CD8-positive, alpha-beta T cell (primary cell): ENCODE measurements at regions of chr14 and their contacts with region 1.

Region 1: DNA sequence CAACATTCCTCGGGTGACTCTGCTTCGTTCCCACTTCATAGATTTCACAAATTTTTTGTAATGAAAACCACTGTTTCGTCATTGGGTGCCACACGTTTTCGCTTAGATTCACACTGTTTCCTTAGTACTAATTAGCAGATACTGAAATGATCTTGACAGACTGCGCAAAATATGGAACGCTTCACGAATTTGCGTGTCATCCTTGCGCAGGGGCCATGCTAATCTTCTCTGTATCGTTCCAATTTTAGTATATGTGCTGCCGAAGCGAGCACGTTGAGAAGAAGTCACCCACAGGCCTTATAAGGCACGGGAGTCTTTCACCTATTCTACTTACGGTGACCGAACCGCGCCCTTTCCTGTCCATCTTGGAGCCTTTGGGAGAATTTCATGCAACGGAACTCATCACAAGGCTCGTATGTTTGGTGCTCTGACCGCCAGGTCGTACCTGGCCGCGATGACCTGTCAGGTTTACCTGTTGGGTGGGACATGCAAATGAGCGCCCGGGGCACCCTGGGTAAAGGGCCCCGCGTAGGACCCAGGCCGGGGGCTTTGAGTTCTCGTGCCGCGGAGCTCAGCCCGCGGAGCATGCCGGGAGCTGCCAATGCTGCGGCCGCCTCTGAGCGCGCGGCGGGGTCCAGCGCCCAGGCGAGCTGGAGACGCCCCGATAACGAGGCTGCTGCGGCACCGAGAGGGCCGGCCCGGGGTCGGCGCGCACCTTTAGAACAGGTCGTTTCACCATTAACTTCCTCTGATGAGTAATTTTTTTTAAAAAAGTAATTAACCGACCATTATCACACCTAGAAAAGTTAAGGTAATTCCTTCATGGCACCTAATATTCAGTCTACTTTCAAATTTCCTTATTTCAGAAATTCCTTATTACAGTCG is at the start of gene RNU6-8:
- DNase-seq: peak; percentile 66 to 92 (median 85)
- ATAC-seq: peak; percentile 80
- H3K4me3 ChIP-seq: peak within 1 kb of the TSS; percentile 87 to 92
- H3K4me3 Mint-ChIP-seq: peak within 1 kb of the TSS; percentile 90
- H3K27ac ChIP-seq: peak within 1 kb of the TSS; percentile 99 to 100
- H3K27ac Mint-ChIP-seq: peak within 1 kb of the TSS; percentile 100
- H3K4me1 ChIP-seq: peaks cover 20% of the 10 kb centered on the region
- H3K4me1 Mint-ChIP-seq: peaks cover 29% of the 10 kb centered on the region
- H3K27me3 ChIP-seq: no peaks in the 10 kb centered on the region
- H3K27me3 Mint-ChIP-seq: peaks cover 2% of the 10 kb centered on the region
- CTCF ChIP-seq: no peak
- total RNA-seq, gene RNU6-8: not detected

Region 2: GRCh38 chr14:31420319-31421111 is 782.7 kb before region 1 on chr14 and contains the start of gene HEATR5A:
- CTCF ChIA-PET with region 1: no interaction called
- POLR2A ChIA-PET with region 1: no interaction called
- intact Hi-C with region 1: loop called (anchors 2 to 5 kb)
- DNase-seq: peak; percentile 87 to 95 (median 93)
- ATAC-seq: peak; percentile 97
- H3K4me3 ChIP-seq: peak within 1 kb of the TSS; percentile 76 to 96
- H3K4me3 Mint-ChIP-seq: peak within 1 kb of the TSS; percentile 97
- H3K27ac ChIP-seq: peak within 1 kb of the TSS; percentile 63 to 71
- H3K27ac Mint-ChIP-seq: peak within 1 kb of the TSS; percentile 91
- H3K4me1 ChIP-seq: peaks cover 13% of the 10 kb centered on the region
- H3K4me1 Mint-ChIP-seq: peaks cover 25% of the 10 kb centered on the region
- H3K27me3 ChIP-seq: no peaks in the 10 kb centered on the region
- H3K27me3 Mint-ChIP-seq: no peaks in the 10 kb centered on the region
- CTCF ChIP-seq: no peak
- total RNA-seq, gene HEATR5A: 3.4 to 3.5 TPM

Region 3: DNA sequence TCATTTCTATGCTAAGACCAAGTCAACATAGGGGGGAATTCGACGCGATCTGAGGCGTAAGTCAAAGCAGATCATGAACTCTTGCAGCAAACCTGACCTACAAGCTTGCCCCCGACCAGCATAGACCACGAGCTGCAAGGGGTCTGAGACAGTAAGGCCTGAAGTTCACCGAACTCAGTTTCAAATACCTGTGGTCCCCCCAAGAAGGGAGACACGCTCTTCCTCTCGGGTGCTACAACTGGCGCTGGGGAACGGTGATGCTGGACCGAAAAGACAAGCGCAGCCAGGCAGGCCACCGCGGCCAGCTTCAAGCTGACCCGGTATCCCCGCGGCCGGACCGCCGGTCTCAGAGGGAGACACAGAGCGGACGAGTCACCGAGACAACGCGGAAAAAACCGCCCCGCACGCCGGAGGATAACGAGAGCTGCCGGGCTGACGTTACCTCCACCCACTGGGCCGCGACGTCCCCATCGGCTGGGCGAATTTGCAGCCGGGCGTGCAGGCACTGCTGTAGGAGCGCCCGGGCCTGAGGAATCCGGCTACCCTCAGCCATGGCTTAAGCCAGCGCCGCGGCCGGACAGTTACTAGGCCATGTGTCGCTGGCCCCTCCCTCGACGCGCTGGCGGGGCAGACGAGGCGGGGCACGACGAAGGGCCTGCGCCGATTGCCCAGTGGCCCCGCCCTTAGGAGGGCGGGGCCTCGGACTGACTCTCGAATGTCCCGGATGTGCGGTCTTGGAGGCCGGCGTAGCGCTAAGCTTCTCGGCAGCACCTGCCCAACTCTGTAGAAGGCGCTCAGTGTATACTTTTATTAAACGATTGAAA is 746.2 kb before region 1 on chr14 and contains the start of gene DTD2:
- CTCF ChIA-PET with region 1: no interaction called
- POLR2A ChIA-PET with region 1: no interaction called
- intact Hi-C with region 1: loop called (anchors 1 to 5 kb)
- DNase-seq: peak; percentile 87 to 95 (median 92)
- ATAC-seq: peak; percentile 98
- H3K4me3 ChIP-seq: peak within 1 kb of the TSS; percentile 93 to 95
- H3K4me3 Mint-ChIP-seq: peak within 1 kb of the TSS; percentile 96
- H3K27ac ChIP-seq: peak within 1 kb of the TSS; percentile 78 to 85
- H3K27ac Mint-ChIP-seq: peak within 1 kb of the TSS; percentile 92
- H3K4me1 ChIP-seq: peaks cover 15% of the 10 kb centered on the region
- H3K4me1 Mint-ChIP-seq: peaks cover 42% of the 10 kb centered on the region
- H3K27me3 ChIP-seq: no peaks in the 10 kb centered on the region
- H3K27me3 Mint-ChIP-seq: peaks cover 2% of the 10 kb centered on the region
- CTCF ChIP-seq: no peak
- total RNA-seq, gene DTD2: 4.9 to 6.5 TPM

Region 4: GRCh38 chr14:31561155-31561846 is 641.9 kb before region 1 on chr14 and contains the start of gene NUBPL:
- CTCF ChIA-PET with region 1: no interaction called
- POLR2A ChIA-PET with region 1: no interaction called
- intact Hi-C with region 1: loop called (anchors 1 kb)
- DNase-seq: peak; percentile 95 to 99 (median 98)
- ATAC-seq: peak; percentile 95
- H3K4me3 ChIP-seq: peak within 1 kb of the TSS; percentile 75 to 86
- H3K4me3 Mint-ChIP-seq: peak within 1 kb of the TSS; percentile 96
- H3K27ac ChIP-seq: peak within 1 kb of the TSS; percentile 82 to 86
- H3K27ac Mint-ChIP-seq: peak within 1 kb of the TSS; percentile 98
- H3K4me1 ChIP-seq: peaks cover 18% of the 10 kb centered on the region
- H3K4me1 Mint-ChIP-seq: peaks cover 35% of the 10 kb centered on the region
- H3K27me3 ChIP-seq: no peaks in the 10 kb centered on the region
- H3K27me3 Mint-ChIP-seq: peaks cover 4% of the 10 kb centered on the region
- CTCF ChIP-seq: no peak
- total RNA-seq, gene NUBPL: 4.7 to 7.5 TPM

Region 5: GRCh38 chr14:31937721-31938346 is 265.4 kb before region 1 on chr14:
- CTCF ChIA-PET with region 1: no interaction called
- POLR2A ChIA-PET with region 1: no interaction called
- intact Hi-C with region 1: no loop called
- DNase-seq: peak in 6 of 9 experiments; percentile 14 to 50 (median 22)
- ATAC-seq: peak; percentile 82
- H3K4me3 ChIP-seq: no peak overlapping the region
- H3K4me3 Mint-ChIP-seq: no peak overlapping the region
- H3K27ac ChIP-seq: no peak overlapping the region
- H3K27ac Mint-ChIP-seq: no peak overlapping the region
- H3K4me1 ChIP-seq: no peaks in the 10 kb centered on the region
- H3K4me1 Mint-ChIP-seq: peaks cover 4% of the 10 kb centered on the region
- H3K27me3 ChIP-seq: no peaks in the 10 kb centered on the region
- H3K27me3 Mint-ChIP-seq: peaks cover 2% of the 10 kb centered on the region
- CTCF ChIP-seq: no peak

Region 6: DNA sequence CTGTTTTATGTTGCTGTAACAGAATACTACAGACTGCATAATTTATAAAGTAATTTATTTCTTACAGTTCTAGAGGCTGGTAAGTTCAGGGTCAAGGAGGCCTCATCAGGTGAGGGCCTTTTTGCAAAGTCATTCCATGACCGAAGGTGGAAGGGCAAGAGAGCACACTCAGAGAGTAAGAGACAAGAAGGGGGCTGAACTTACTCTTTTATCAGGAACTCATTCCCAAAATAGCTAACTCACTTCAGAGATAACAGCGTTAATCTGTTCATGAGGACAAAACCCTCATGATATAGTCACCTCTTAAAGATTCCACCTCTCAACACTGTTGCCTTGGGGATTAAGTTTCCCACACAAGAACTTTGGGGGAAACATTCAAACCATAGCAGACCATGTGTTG is 52.8 kb before region 1 on chr14:
- CTCF ChIA-PET with region 1: no interaction called
- POLR2A ChIA-PET with region 1: no interaction called
- intact Hi-C with region 1: loop called in 1 of 2 experiments (anchors 5 kb)
- DNase-seq: no peak
- ATAC-seq: no peak
- H3K4me3 ChIP-seq: no peak overlapping the region
- H3K4me3 Mint-ChIP-seq: no peak overlapping the region
- H3K27ac ChIP-seq: no peak overlapping the region
- H3K27ac Mint-ChIP-seq: no peak overlapping the region
- H3K4me1 ChIP-seq: no peaks in the 10 kb centered on the region
- H3K4me1 Mint-ChIP-seq: no peaks in the 10 kb centered on the region
- H3K27me3 ChIP-seq: no peaks in the 10 kb centered on the region
- H3K27me3 Mint-ChIP-seq: no peaks in the 10 kb centered on the region
- CTCF ChIP-seq: no peak

Region 7: DNA sequence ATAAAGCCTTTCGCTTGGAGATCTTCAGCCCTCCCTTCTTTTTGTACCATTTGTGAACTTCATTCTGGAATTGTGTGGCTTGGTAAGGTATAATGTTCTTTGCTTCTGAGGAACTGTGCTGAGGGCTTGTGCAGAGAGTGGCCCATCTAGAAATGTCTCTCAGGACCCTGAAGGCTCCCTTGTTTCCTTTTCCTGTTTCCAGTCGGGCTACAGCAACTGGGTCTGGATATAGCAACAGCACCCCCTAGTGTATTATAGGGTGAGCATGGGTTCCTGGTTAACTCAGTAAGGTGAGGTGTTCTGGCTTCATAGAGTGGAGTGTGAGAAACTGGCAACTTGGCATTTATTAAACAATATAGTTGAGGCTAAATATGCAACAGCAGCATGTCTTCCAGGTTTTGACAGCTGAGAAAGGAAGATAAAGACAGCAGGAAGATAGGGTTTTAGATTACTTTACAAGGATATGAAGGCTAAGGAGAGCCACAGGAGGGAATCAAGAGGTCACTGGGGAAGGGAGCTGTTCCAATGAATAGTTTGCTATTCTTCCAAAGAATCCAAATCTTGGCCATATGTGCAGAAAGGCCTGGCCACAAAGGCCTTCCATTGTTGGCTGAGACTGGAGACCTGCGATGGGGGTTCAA is 48.9 kb after region 1 on chr14:
- CTCF ChIA-PET with region 1: interaction called, 5 read pairs
- POLR2A ChIA-PET with region 1: no interaction called
- intact Hi-C with region 1: loop called (anchors 1 to 5 kb)
- DNase-seq: peak in 8 of 9 experiments; percentile 3 to 78 (median 46)
- ATAC-seq: peak; percentile 90
- H3K4me3 ChIP-seq: no peak overlapping the region
- H3K4me3 Mint-ChIP-seq: no peak overlapping the region
- H3K27ac ChIP-seq: no peak overlapping the region
- H3K27ac Mint-ChIP-seq: no peak overlapping the region
- H3K4me1 ChIP-seq: no peaks in the 10 kb centered on the region
- H3K4me1 Mint-ChIP-seq: no peaks in the 10 kb centered on the region
- H3K27me3 ChIP-seq: no peaks in the 10 kb centered on the region
- H3K27me3 Mint-ChIP-seq: no peaks in the 10 kb centered on the region
- CTCF ChIP-seq: peak; percentile 87